ENCODE measurements at regions of chr15 and their contacts with region 1.

Region 1: GRCh38 chr15:46014532-46014931 is 379.7 kb downstream of the SQOR start:
- DNase-seq: no peak
- ATAC-seq: no peak

Region 2: GRCh38 chr15:45442500-45443135 is 571.9 kb before region 1 on chr15:
- intact Hi-C with region 1: no loop called
- DNase-seq: no peak
- ATAC-seq: no peak

Region 3: GRCh38 chr15:46061002-46061401 is 46.5 kb after region 1 on chr15:
- intact Hi-C with region 1: no loop called
- DNase-seq: no peak
- ATAC-seq: no peak

Region 4: GRCh38 chr15:46091860-46092450 is 77.4 kb after region 1 on chr15:
- intact Hi-C with region 1: no loop called
- DNase-seq: no peak
- ATAC-seq: no peak

Region 5: GRCh38 chr15:46442184-46442583 is 427.7 kb after region 1 on chr15:
- intact Hi-C with region 1: loop called (anchors 5 kb)
- DNase-seq: no peak
- ATAC-seq: no peak

Measured in left ventricle myocardium superior (tissue), 1 donor.